RWPE1 (cell line): ENCODE measurements at regions of chr19 and their contacts with region 1.

Region 1: GRCh38 chr19:40425450-40426287 is at the start of gene SERTAD1:
- DNase-seq: peak; percentile 97
- H3K27ac ChIP-seq: peak within 1 kb of the TSS; percentile 99
- CTCF ChIP-seq: peak; percentile 51

Region 2: DNA sequence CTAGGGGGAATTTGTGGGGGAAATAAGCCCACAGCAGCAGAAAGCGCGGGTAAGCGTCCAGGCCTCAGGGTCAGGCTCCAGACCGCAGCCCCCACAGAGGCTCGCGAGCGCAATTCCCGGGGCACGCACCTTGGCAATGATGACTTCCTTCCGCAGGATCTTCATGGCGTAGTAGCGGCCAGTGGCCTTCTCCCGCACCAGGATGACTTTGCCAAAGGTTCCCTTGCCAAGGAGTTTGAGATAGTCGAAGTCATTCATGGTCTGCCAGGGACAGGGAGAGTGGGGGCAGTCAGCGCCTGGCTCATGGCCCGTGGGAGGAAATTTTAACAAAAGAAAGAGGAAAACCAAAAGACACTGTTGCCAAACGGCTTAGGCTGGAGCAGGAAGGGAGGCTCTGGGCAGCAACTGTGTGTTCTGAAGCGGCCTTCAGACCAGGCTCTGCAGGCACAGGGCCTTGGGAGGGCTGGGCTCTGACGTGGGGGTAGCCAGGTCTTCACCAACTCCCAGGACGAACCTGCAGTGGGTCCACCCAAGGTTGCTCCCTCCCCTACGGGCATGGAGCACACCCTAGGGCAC is 183.8 kb before region 1 on chr19:
- CTCF ChIA-PET with region 1: no interaction called
- POLR2A ChIA-PET with region 1: no interaction called
- DNase-seq: no peak
- H3K27ac ChIP-seq: 0 out of 2 replicates have a peak overlapping the region, but pooled peaks have one; percentile 7
- CTCF ChIP-seq: no peak

Region 3: GRCh38 chr19:40411125-40411842 is 14.4 kb before region 1 on chr19:
- CTCF ChIA-PET with region 1: interaction called, 15 read pairs
- POLR2A ChIA-PET with region 1: interaction called, 3 read pairs
- DNase-seq: no peak
- H3K27ac ChIP-seq: peak overlapping the region; percentile 84
- CTCF ChIP-seq: no peak

Region 4: DNA sequence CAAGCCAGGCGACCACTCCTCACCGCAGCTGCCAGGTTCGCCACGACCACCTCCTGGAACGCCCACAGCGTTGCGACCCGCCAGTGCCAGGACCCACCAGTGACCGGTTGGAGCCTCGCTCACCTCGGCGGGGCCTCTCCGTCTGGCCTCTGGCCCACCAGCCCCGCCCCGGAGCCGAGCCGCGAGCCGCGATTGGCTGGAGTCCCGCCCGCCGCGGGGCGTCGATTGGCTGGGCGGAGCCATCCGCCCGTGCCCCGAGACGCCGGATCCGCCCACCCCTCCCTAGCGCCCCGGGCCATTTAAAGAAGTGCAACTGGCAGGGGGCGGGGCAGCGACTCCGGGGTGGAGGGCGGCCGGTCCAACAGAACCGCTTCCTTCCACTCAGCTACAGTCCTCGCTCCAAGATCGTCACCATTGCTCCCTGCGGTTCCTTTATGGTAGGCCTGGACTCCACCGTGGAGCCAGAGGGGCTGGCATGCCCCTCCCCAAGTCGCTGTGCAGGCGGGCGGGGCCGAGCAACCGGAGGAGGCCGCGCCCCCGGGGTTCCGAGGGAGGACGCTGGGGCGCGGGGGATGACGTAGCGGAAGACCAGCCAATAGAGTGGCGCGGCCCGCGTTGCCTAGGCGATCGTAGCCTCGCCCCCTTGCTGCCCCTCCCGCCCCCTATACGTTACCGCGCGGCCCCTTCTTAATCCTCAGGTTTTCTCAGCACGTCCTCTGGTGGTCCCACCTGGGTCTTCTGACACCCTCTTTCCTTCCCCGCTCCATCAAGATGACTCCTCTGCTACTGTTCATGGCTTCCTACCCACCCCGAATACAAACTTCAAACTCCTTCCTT is 18.7 kb after region 1 on chr19 and contains the start of gene SERTAD3:
- CTCF ChIA-PET with region 1: interaction called, 13 read pairs
- POLR2A ChIA-PET with region 1: interaction called, 13 read pairs
- DNase-seq: peak; percentile 98
- H3K27ac ChIP-seq: peak within 1 kb of the TSS; percentile 96
- CTCF ChIP-seq: peak; percentile 26

Region 5: DNA sequence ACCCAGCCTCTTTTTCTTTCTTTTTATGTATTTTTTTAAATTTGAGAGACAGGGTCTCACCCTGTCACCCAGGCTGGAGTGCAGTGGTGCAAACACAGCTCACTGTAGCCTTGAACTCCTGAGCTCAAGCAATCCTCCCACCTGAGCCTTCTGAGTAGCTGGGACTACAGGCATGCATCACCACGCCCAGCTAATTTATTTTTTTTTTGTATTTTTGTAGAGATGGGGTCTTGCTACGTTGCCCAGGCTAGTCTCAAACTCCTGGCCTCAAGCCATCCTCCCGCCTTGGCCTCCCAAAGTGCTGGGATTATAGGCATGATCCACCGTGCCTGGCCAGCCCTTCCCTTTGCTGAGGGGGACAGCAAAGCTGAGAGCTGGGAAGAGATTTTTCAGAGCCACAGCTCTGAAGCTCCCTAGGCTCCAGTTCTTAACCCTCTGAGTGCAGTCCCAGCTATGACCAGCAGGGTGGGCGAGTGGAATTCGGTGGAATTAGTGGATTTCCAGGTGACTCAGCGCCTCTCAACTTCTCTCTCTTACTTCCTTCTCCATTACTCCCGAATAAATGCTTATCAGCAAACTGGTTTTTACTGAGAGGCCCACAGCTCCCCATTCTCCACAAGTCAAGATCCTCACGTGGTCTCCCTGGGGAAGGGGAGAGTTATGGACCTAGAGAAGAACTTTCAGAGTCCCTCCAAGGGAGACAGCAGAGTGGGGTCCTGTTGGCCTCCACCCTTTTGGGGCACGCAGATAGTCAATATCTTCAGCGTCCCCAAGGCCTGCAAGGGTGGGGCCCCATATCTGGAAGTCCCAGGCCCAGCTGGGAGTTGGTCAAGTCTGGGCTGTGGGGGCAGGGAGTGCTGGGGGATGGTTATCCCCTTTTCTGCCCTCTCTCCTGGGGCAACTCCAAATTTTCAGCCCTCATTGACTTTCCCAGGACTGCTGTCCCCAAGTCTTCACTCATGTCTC is 38.7 kb after region 1 on chr19:
- CTCF ChIA-PET with region 1: interaction called, 10 read pairs
- POLR2A ChIA-PET with region 1: interaction called, 3 read pairs
- DNase-seq: peak; percentile 67
- H3K27ac ChIP-seq: peak overlapping the region; percentile 85
- CTCF ChIP-seq: peak; percentile 78